ENCODE measurements at regions of chrX and their contacts with region 1.

Region 1: DNA sequence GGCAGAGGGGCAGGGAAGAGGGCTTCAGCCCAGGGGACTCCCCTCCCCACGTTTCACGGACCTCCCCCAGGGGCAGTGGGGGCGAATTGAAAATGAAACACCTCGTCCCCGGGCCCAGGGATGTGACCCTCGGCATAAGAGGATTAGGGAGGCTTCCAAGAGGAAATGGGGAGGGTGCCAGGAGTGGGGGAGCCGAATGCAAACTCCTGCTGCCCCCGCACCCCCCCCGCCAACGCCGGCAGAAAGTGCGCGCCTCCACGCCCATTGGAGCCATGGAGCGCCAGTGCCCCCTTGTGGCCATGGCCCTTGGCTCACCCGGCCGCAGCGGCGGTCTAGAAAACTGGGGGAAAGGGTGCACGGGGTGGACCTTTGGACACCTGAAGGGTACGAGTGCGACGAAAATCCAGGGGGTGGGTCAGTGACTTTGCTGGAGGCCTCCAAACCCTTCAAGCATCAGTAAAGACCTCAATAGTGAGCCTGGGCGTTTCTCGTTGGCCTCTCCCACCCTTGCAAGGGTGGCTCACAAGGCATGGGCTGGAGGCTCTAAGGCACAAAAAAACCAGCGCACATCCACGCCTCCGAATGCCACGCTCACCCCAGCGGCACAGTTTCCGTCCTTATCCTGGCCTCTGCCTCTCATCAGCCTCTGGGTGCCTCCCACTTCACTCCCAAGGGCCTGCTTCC is 120.8 kb upstream of the PJA1 start:
- DNase-seq: peak; percentile 9
- H3K4me3 ChIP-seq: peak overlapping the region in 1 of 3 experiments; percentile 43
- H3K27ac ChIP-seq: no peak overlapping the region
- H3K4me1 ChIP-seq: peaks cover 6% of the 10 kb centered on the region
- H3K27me3 ChIP-seq: no peaks in the 10 kb centered on the region
- CTCF ChIP-seq: peak; percentile 45 to 82

Region 2: DNA sequence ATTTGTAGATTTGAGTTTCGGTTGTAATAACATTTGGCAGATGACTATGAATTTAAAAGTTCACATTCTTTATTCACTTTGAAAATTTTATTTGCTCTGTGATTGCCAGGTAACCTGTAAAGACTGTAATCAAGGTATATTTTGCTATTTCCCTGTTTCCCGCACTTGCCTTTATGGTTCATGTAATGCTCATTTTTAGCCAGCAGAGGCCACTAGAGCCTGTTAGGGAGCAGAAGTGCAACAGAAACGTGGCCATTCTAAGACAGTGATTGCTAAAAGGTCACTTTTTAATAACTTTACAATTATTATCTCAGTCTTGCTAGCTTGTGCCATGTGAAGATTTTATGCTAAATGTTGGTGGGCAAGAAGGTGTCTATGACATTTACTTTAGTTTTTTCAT is 774.8 kb before region 1 on chrX:
- CTCF ChIA-PET with region 1: no interaction called
- dilution Hi-C with region 1: no loop called
- in situ Hi-C with region 1: no loop called
- intact Hi-C with region 1: loop called (anchors 2 kb)
- DNase-seq: peak; percentile 32
- H3K4me3 ChIP-seq: no peak overlapping the region
- H3K27ac ChIP-seq: no peak overlapping the region
- H3K4me1 ChIP-seq: no peaks in the 10 kb centered on the region
- H3K27me3 ChIP-seq: no peaks in the 10 kb centered on the region
- CTCF ChIP-seq: peak; percentile 85 to 86

Region 3: GRCh38 chrX:68732906-68733493 is 553.0 kb before region 1 on chrX:
- CTCF ChIA-PET with region 1: no interaction called
- dilution Hi-C with region 1: no loop called
- in situ Hi-C with region 1: no loop called
- intact Hi-C with region 1: loop called (anchors 2 kb)
- DNase-seq: peak; percentile 34
- H3K4me3 ChIP-seq: no peak overlapping the region
- H3K27ac ChIP-seq: no peak overlapping the region
- H3K4me1 ChIP-seq: no peaks in the 10 kb centered on the region
- H3K27me3 ChIP-seq: peaks cover 3% of the 10 kb centered on the region
- CTCF ChIP-seq: peak; percentile 78 to 84

Region 4: DNA sequence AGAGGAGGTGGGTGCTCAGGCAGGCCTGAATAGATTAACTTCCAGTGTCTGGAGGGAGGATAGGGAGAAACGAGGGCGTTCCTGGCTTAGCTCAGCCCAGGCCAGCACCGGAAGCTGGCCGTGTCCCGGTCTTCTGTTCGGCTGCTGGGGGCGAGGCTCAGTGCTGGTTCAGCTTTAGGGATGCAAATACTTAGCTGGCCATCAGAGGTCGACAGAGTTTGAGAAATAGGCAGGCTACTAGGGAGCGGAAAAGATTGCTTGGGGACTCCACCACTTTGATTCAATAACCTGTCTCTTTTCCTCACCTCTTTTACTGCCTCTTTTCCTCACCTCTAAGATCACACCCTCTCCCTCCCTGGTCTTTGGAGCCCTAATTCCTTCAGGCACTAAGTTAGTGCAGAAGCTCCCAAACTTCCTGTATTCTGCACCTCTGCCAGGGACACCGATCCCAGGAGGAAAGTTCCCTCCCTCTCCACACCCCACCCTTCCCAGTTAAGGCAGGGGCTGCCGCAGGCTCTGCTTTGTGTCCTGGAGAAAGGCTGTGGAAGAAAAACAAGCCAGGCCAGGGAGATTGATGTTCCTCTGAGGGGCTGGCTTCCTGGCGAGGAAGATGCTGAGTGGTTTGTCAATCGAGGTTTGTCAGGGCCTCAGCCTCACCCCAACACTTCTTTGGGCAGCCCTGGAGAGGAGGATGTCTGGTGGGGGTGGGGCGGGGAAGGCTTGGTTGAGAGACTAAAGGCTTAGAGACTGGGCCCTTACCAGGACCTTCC is 463.2 kb before region 1 on chrX:
- CTCF ChIA-PET with region 1: no interaction called
- dilution Hi-C with region 1: no loop called
- in situ Hi-C with region 1: loop called (anchors 5 to 10 kb)
- intact Hi-C with region 1: loop called (anchors 1 kb)
- DNase-seq: no peak
- H3K4me3 ChIP-seq: no peak overlapping the region
- H3K27ac ChIP-seq: no peak overlapping the region
- H3K4me1 ChIP-seq: peaks cover 4% of the 10 kb centered on the region
- H3K27me3 ChIP-seq: no peaks in the 10 kb centered on the region
- CTCF ChIP-seq: peak; percentile 71 to 72

Region 5: GRCh38 chrX:69060631-69061408 is 225.2 kb before region 1 on chrX:
- CTCF ChIA-PET with region 1: no interaction called
- dilution Hi-C with region 1: no loop called
- in situ Hi-C with region 1: no loop called
- intact Hi-C with region 1: loop called (anchors 1 kb)
- DNase-seq: peak; percentile 36
- H3K4me3 ChIP-seq: no peak overlapping the region
- H3K27ac ChIP-seq: no peak overlapping the region
- H3K4me1 ChIP-seq: no peaks in the 10 kb centered on the region
- H3K27me3 ChIP-seq: no peaks in the 10 kb centered on the region
- CTCF ChIP-seq: peak in 1 of 2 donors; percentile 48

Region 6: GRCh38 chrX:69133921-69134542 is 152.0 kb before region 1 on chrX:
- CTCF ChIA-PET with region 1: no interaction called
- dilution Hi-C with region 1: no loop called
- in situ Hi-C with region 1: no loop called
- intact Hi-C with region 1: loop called (anchors 2 kb)
- DNase-seq: peak; percentile 61
- H3K4me3 ChIP-seq: no peak overlapping the region
- H3K27ac ChIP-seq: no peak overlapping the region
- H3K4me1 ChIP-seq: no peaks in the 10 kb centered on the region
- H3K27me3 ChIP-seq: no peaks in the 10 kb centered on the region
- CTCF ChIP-seq: peak; percentile 58 to 71

Region 7: DNA sequence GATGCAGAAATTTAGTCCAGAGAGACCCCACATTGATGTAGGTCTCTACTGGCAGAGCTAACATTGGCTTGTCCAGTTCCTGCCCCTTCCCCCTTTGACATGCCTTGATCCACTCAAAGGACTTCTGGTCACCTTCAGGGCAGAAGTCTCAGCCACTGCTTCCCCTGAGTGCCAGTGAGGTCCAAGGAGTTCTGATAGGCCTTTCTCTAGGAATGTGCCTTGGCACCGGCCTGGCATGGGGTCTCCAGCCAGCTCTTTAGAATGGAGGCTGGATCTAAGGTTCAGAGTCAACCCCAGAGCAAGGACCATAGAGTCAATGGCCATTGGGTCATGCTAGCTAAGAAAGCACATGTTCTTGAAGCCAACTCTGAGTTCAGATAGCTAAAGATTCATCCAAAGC is 32.2 kb before region 1 on chrX:
- CTCF ChIA-PET with region 1: no interaction called
- dilution Hi-C with region 1: no loop called
- in situ Hi-C with region 1: no loop called
- intact Hi-C with region 1: no loop called
- DNase-seq: no peak
- H3K4me3 ChIP-seq: no peak overlapping the region
- H3K27ac ChIP-seq: no peak overlapping the region
- H3K4me1 ChIP-seq: no peaks in the 10 kb centered on the region
- H3K27me3 ChIP-seq: no peaks in the 10 kb centered on the region
- CTCF ChIP-seq: no peak

Region 8: DNA sequence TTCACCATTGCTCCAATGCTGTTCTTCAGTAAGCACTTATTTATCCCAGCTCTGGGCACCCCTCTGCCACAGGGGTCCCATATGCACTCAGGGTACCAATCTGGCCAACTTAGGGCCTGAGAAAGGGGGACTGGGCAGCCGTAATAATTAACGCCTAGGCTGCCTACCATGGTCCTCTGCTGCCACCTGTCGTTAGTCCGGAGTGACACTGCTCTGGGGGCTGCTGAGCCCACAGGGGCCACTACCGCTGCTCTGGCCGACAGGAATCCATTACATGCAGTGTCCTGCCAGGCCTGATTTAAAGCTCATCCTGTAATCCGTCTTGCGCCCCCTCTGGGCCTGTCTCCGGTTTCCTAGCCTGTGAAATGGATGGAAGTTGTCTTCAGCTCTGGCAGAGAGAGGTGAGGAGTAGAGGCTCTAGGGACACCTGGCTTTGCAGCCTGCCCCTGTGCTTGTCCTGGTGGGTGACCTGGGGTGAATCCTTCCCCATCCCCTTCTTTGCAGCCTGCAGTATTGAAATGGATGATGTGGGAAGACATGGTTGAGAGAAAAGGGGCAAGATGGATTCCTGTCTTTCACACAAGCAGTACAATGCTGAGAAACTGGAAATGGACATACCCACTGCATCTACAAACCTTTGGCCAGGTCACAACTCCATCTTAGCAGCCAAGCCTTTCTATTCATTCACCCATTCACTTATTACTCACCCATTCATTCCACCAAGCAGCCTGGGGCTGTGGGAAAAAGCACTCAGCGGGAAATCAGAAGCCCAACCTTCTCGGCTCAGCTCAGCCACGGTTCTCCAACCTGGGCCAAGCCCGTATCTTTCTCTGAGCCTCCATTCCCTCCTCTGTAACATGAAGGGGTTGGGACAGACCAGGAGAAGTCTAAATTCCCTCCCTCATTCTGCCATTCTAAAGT is 101.8 kb after region 1 on chrX:
- CTCF ChIA-PET with region 1: no interaction called
- dilution Hi-C with region 1: no loop called
- in situ Hi-C with region 1: no loop called
- intact Hi-C with region 1: loop called (anchors 5 kb)
- DNase-seq: peak; percentile 8
- H3K4me3 ChIP-seq: no peak overlapping the region
- H3K27ac ChIP-seq: no peak overlapping the region
- H3K4me1 ChIP-seq: peaks cover 9% of the 10 kb centered on the region
- H3K27me3 ChIP-seq: no peaks in the 10 kb centered on the region
- CTCF ChIP-seq: peak; percentile 64 to 85

Region 9: DNA sequence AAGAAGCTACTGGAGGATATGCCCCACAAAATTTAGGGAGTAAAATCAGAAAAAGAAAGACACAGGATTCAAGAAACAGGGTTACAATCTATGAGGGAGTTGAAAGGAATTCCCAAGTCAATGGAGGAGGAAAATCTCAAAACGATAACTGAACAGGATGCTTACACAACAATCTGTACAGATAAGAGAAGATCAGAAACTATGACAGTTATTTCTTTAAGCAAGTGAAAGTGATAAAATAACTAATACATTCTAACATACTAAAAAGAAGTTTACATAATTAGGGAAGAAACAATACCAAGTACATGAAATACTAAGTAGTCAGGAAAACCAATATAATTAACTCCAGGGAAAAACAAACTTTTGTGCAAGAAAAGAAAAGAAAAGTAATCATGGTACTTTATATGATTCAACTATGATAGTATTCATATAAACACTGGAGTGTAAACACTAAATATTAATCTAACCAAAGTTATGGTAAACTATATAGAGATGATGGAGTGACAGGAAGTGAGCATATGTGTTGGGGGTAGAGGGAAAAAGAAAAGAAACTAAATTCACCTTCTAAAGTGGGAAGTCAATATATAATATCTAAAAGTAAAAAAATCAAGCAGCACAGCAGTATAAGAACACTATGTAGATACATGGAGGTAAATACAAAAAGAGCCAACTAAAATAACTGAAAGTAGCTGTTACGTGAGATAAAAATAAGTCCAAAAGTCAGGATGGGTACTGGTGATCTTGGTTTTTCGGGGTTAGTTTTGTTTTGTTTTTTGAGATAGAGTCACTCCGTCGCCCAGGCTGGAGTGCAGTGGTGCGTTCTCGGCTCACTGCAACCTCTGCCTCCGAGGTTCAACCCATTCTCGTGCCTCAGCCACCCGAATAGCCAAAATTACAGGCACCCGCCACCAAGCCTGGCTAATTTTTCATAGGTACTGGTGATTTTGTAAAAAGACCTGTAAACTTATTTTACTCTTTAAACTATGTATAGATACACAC is 1523.2 kb after region 1 on chrX:
- CTCF ChIA-PET with region 1: no interaction called
- dilution Hi-C with region 1: no loop called
- in situ Hi-C with region 1: no loop called
- intact Hi-C with region 1: no loop called
- DNase-seq: no peak
- H3K4me3 ChIP-seq: no peak overlapping the region
- H3K27ac ChIP-seq: no peak overlapping the region
- H3K4me1 ChIP-seq: no peaks in the 10 kb centered on the region
- H3K27me3 ChIP-seq: peaks cover under 1% of the 10 kb centered on the region
- CTCF ChIP-seq: no peak